ENCODE measurements at regions of chr17 and their contacts with region 1.

Region 1: GRCh38 chr17:59829217-59830006 is 63.3 kb downstream of the TUBD1 start:
- DNase-seq: peak; percentile 99
- H3K4me3 ChIP-seq: peak overlapping the region; percentile 27
- H3K27ac ChIP-seq: peak overlapping the region; percentile 97
- H3K4me1 ChIP-seq: peaks cover 75% of the 10 kb centered on the region
- H3K27me3 ChIP-seq: no peaks in the 10 kb centered on the region
- CTCF ChIP-seq: no peak

Region 2: DNA sequence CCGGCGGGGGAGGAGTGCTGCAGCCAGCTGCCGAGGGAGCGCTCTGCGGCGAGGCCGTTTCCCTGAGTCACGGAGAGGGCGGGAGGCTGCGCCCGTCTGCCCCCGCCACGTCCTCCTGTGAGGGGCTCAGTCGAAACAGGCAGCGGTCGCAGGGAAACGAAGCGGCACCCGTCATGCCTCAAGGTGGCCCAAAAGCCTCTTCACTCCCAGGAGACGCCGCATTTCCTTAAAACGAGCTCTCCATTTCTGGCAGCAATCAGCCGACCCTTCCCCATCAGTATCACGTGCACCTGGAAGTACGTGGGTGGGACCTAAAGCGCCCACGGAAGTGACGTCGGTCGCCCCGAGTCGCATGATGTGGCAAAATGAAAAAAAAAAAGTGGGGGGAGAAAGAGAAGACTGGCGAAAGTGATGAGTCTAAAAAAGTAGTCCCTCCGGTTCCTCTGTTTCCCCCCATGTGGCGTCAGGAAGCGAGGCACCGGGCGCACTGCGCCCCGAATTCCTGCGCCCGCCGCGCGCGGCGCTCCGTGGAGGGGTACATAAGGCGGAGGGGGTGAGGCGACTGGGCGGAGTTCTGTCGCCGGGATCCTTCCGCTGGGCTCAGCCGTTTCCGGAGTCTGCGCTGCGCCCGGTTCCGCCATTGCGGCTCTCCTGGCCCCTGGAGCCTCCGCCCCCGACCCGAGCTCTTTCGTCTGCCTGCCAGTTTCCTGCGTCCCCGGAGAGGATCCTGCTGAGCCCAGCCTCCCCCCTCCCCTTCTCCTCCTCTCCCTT is 209.9 kb before region 1 on chr17 and contains the start of gene CLTC:
- CTCF ChIA-PET with region 1: no interaction called
- POLR2A ChIA-PET with region 1: no interaction called
- intact Hi-C with region 1: no loop called
- DNase-seq: peak; percentile 99
- H3K4me3 ChIP-seq: peak within 1 kb of the TSS; percentile 82
- H3K27ac ChIP-seq: peak within 1 kb of the TSS; percentile 98
- H3K4me1 ChIP-seq: peaks cover 43% of the 10 kb centered on the region
- H3K27me3 ChIP-seq: no peaks in the 10 kb centered on the region
- CTCF ChIP-seq: no peak
- total RNA-seq, gene CLTC: 313 and 321 TPM in 2 replicates

Region 3: DNA sequence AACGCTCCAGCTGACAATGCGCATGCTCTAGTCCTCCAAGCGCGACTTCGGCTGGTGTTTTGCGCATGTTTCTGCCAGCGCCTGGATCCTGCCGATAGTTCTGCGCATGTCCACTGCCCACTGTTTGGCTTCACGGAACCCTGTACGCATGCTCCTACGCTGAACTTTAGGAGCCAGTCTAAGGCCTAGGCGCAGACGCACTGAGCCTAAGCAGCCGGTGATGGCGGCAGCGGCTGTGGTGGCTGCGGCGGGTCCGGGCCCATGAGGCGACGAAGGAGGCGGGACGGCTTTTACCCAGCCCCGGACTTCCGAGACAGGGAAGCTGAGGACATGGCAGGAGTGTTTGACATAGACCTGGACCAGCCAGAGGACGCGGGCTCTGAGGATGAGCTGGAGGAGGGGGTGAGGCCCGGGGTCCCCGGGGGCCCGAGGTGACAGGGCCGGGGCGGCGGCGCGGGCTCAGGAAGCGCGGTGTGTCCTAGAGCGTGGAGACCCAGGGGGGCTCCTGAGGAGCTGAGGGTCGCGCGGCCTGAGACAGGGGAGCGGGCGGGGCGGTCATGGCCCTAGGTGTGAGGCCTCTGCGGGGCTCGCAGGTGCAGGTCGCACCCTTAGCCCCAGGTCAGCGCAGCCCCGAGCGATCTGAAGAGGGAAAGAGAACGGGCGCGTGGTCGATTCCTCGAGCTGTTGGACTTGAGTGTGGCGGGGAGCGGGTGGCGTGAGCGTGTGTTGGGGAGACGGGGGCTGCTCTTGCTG is 63.7 kb after region 1 on chr17 and contains the starts of genes RPS6KB1 and TUBD1:
- CTCF ChIA-PET with region 1: no interaction called
- POLR2A ChIA-PET with region 1: no interaction called
- intact Hi-C with region 1: no loop called
- DNase-seq: peak; percentile 99
- H3K4me3 ChIP-seq: peak within 1 kb of the TSS; percentile 82
- H3K27ac ChIP-seq: peak within 1 kb of the TSS; percentile 86
- H3K4me1 ChIP-seq: peaks cover 4% of the 10 kb centered on the region
- H3K27me3 ChIP-seq: no peaks in the 10 kb centered on the region
- CTCF ChIP-seq: no peak
- total RNA-seq, gene RPS6KB1: 56.4 and 56.5 TPM in 2 replicates
- total RNA-seq, gene TUBD1: 16.1 and 23.3 TPM in 2 replicates

Region 4: DNA sequence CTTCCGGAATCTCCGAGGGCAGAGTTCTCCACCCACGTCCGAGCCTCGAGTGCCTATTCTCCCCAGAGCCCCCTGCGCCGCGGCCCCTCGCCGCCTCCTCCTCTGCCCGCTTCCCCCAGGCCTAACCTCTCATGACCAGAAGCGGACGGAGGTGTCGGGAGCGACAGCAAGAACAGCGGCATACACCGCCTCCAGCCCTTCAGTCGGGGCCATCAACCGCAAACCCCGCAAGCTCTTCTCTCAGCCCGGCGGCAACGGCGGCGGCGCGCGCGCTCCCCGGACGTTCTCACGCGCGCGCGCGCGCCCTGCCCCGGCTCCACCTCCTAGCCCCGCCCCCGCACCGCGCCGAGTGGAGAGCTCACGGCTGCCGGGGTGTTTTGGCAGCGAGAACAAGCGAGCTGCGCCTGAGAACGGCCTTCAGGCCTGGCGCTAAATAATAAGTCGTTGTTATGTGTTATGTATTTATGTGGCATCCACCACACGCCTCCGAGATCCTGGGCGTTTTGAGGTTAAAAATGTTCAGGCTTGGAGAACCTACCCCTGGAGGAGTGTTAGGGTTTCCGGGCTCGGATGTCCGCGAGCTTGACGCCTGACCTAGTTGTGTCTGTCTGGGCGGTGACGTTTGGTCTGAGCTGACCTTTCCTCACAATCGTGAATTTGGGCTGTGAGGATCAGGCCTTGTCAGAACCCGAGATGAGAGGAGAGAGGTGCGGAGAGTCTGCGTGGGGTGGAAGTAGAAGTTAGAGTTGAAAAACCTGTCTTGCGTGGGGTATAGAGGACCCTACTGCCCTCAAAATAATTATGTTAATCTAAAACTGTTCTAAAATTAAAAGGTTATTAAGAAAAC is 135.3 kb after region 1 on chr17 and contains the start of gene RNFT1:
- CTCF ChIA-PET with region 1: no interaction called
- POLR2A ChIA-PET with region 1: interaction called, 10 read pairs
- intact Hi-C with region 1: no loop called
- DNase-seq: peak; percentile 95
- H3K4me3 ChIP-seq: peak within 1 kb of the TSS; percentile 82
- H3K27ac ChIP-seq: peak within 1 kb of the TSS; percentile 79
- H3K4me1 ChIP-seq: no peaks in the 10 kb centered on the region
- H3K27me3 ChIP-seq: no peaks in the 10 kb centered on the region
- CTCF ChIP-seq: no peak
- total RNA-seq, gene RNFT1: 14.0 and 16.0 TPM in 2 replicates